Activated naive CD4-positive, alpha-beta T cell treated with anti-CD3 and anti-CD28 coated beads for 36 hours (primary cell): ENCODE measurements at regions of chr12 and their contacts with region 1.

Region 1: DNA sequence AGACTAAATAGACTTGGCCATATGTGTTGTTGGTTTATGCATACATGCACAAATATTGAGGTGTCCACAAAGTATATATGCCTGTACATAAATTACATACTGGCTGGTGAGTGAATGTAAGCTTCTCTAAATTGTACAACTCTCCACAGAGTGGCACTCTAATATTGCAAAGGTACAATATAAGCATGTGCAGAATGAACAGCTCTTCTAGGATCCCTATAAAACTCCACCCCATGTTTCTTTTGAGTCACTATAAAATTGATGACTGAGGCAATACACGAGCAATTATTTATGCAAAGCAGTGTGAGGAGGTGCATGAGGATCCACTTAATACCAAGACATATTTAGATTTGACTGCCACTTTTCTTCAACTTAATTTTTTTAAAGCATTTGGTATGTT is 172.2 kb downstream of the NAV3 start:
- DNase-seq: no peak
- H3K4me3 Mint-ChIP-seq: no peak overlapping the region
- H3K27ac Mint-ChIP-seq: no peak overlapping the region
- H3K4me1 Mint-ChIP-seq: no peaks in the 10 kb centered on the region
- H3K27me3 Mint-ChIP-seq: no peaks in the 10 kb centered on the region

Region 2: DNA sequence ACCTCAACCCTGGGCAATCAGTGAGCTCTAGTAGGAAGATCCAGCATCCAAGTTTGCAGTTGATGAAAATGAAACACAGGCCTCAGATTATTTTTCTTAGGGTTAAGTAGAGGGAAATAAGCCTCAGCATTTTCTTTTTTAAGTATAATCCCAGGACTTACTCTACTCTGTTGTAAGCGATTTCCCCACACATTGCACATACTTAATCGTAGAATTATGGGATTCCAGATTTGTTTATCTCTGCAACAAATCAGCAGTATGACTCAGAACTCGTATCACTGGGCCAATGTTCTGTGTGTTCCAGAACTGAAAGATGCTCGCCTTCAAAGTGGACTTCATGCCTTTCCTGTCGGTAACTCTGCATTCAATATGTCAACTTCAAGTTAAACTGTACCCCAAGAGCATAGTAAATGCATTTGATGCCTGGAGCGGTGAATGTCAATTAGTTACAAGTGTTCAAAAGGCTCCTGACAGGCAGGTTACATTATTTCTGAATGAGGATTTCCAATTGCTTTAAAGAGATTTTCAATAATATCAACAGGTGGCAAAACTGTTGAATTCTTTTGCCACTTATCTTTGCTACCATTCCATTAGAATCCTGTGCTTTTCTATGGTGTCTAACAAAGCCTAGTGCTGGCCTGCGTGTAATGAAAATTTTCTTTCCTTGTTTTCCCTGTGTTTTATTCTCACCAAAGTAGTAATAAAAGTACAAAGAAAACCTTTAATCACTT is 537.9 kb after region 1 on chr12:
- CTCF ChIA-PET with region 1: no interaction called
- intact Hi-C with region 1: no loop called
- DNase-seq: no peak
- H3K4me3 Mint-ChIP-seq: no peak overlapping the region
- H3K27ac Mint-ChIP-seq: no peak overlapping the region
- H3K4me1 Mint-ChIP-seq: no peaks in the 10 kb centered on the region
- H3K27me3 Mint-ChIP-seq: no peaks in the 10 kb centered on the region

Region 3: GRCh38 chr12:79344855-79345847 is 1342.3 kb after region 1 on chr12:
- CTCF ChIA-PET with region 1: no interaction called
- intact Hi-C with region 1: loop called (anchors 10 kb)
- DNase-seq: peak; percentile 36
- H3K4me3 Mint-ChIP-seq: no peak overlapping the region
- H3K27ac Mint-ChIP-seq: no peak overlapping the region
- H3K4me1 Mint-ChIP-seq: no peaks in the 10 kb centered on the region
- H3K27me3 Mint-ChIP-seq: peaks cover 2% of the 10 kb centered on the region